ENCODE measurements at regions of chr9 and their contacts with region 1.

Region 1: DNA sequence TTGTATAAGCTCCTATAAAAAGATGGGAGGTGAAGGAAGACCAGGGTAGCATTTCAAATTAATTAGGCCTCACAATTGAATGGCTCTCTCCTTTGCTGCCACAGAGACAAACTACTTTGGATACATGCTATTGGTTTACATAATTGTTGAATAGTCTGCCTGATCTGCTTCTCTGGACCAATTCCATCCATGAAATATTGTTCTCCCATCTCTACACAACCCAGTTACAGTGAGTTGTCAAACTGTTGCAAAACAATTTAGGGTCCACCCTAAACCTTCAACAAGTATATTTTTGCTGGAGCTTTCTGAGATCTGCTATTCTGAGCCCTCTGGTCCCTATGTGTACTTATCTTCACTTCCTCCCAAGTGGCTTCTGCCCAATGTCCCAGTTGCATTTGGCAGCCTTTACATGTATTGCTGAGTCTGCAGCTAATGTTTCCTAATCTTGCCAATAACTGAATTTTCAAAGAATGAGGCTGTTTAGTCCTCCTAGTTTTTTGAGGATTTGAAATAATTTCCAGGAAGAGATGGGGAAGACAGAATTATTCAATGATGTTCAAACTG is 38.9 kb downstream of the AGTPBP1 start:
- DNase-seq: no peak
- H3K4me3 ChIP-seq: no peak overlapping the region
- H3K27ac ChIP-seq: no peak overlapping the region
- H3K4me1 ChIP-seq: no peaks in the 10 kb centered on the region
- H3K27me3 ChIP-seq: no peaks in the 10 kb centered on the region
- CTCF ChIP-seq: no peak

Region 2: GRCh38 chr9:85676790-85677189 is 26.0 kb before region 1 on chr9:
- CTCF ChIA-PET with region 1: interaction called, 12 read pairs
- dilution Hi-C with region 1: no loop called
- in situ Hi-C with region 1: no loop called
- intact Hi-C with region 1: no loop called
- DNase-seq: no peak
- H3K4me3 ChIP-seq: no peak overlapping the region
- H3K27ac ChIP-seq: no peak overlapping the region
- H3K4me1 ChIP-seq: no peaks in the 10 kb centered on the region
- H3K27me3 ChIP-seq: no peaks in the 10 kb centered on the region
- CTCF ChIP-seq: no peak

Region 3: DNA sequence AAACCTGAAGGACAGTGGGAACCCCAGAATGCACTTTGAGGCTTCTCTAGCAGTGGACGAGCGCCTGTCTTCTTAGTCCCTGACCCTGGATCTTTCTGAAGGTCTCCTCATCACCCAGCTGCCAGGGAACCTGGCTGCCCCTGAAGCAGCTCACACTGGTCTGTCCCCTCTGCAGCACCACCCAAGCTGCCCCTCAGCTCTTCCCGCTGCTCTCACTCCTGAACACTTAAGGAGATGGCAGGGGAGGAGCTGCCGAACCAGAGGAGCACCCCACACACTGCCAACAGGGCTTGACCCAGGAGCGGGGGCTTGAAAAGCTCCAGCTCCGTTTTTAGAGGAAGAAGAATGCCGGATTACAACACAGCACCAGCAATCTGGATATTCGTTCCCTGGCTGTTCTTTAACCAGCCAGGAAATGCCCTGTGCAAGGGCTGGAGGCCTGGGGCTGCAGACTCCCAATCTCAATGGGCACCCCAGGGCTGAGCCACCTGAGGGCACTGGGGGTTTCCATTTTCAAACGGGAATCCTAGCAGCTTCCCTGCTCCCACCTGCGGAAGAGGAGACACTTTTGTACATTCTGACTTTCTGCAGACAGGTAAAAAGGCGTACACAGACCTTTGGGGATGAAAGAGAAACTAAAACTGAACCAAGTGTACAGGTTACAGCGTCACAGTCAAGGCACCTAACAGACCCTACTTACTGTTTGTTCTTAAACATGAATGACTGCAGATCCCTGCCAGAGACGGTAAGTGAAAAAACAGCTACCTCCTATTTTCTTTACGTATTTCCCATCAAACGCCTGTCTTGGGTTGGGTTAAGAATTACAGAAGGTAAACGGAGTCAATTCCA is 360.3 kb after region 1 on chr9:
- CTCF ChIA-PET with region 1: no interaction called
- dilution Hi-C with region 1: no loop called
- in situ Hi-C with region 1: no loop called
- intact Hi-C with region 1: no loop called
- DNase-seq: no peak
- H3K4me3 ChIP-seq: no peak overlapping the region
- H3K27ac ChIP-seq: no peak overlapping the region
- H3K4me1 ChIP-seq: no peaks in the 10 kb centered on the region
- H3K27me3 ChIP-seq: no peaks in the 10 kb centered on the region
- CTCF ChIP-seq: no peak

Region 4: GRCh38 chr9:86238861-86239770 is 536.3 kb after region 1 on chr9:
- CTCF ChIA-PET with region 1: no interaction called
- dilution Hi-C with region 1: no loop called
- in situ Hi-C with region 1: no loop called
- intact Hi-C with region 1: no loop called
- DNase-seq: no peak
- H3K4me3 ChIP-seq: no peak overlapping the region
- H3K27ac ChIP-seq: no peak overlapping the region
- H3K4me1 ChIP-seq: no peaks in the 10 kb centered on the region
- H3K27me3 ChIP-seq: no peaks in the 10 kb centered on the region
- CTCF ChIP-seq: peak in 1 of 2 donors; percentile 1

Measured in mammary epithelial cell (primary cell).